ENCODE measurements at regions of chr4 and their contacts with region 1.

Region 1: DNA sequence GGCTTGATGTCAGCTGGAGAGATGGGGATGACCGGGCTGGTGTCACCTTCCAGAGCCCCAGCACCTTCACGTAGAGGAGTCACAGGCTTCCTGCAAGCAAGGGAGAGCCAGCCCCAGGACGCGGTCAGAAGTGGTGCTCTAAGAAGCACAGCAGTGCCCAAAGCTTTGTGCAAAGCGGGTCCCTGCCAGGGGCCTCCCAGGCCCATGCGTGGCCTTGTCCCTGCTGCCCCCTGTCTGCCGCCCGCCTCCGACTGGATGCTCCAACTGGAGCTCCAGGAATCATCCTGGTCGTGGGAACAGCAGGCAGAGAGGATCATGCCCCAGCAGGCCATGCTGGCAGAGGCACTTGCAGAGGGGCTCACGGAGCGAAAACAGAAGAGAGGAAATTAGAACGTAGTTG is 40.1 kb upstream of the LRPAP1 start:
- DNase-seq: no peak
- ATAC-seq: no peak
- H3K4me3 ChIP-seq: no peak overlapping the region
- H3K27ac ChIP-seq: no peak overlapping the region
- H3K4me1 ChIP-seq: no peaks in the 10 kb centered on the region
- H3K27me3 ChIP-seq: no peaks in the 10 kb centered on the region

Region 2: GRCh38 chr4:2817701-2818350 is 754.5 kb before region 1 on chr4:
- intact Hi-C with region 1: no loop called
- DNase-seq: no peak
- ATAC-seq: no peak
- H3K4me3 ChIP-seq: peak overlapping the region; percentile 29 to 78
- H3K27ac ChIP-seq: no peak overlapping the region
- H3K4me1 ChIP-seq: no peaks in the 10 kb centered on the region
- H3K27me3 ChIP-seq: no peaks in the 10 kb centered on the region

Region 3: DNA sequence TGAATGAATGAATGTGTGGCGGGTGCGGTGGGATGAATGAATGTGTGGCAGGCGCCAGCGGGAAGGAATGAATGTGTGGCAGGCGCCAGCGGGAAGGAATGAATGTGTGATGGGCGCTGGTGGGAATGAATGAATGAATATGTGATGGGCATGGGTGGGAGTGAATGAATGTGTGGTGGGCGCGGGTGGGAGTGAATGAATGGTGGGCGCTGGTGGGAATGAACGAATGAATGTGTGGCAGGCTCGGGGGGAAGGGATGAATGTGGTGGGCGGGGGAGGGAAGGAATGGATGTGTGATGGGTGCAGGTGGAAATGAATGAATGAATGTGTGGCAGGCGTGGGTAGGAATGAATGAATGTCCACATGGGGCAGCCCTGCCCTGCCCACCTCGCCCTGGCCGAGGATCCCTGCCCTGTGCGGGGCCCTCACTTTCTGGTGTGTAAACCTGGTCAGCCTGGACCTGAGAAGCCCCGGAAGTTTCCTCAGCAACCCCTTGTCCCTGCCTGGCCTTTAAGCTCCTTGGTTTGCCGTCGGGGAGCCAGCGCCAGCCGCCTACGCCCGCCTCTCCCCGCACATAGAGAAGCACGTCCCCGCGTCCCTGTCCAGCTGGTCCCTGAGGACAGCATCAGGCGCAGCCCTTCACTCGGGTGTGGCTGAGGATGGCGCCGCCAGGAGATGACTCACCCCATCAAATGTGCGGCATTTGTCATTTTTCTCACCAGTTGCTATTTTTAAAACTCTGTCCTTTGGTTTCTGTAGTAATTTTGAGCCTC is 72.7 kb after region 1 on chr4:
- intact Hi-C with region 1: no loop called
- DNase-seq: peak; percentile 60 to 85
- ATAC-seq: no peak
- H3K4me3 ChIP-seq: no peak overlapping the region
- H3K27ac ChIP-seq: no peak overlapping the region
- H3K4me1 ChIP-seq: no peaks in the 10 kb centered on the region
- H3K27me3 ChIP-seq: no peaks in the 10 kb centered on the region

Region 4: DNA sequence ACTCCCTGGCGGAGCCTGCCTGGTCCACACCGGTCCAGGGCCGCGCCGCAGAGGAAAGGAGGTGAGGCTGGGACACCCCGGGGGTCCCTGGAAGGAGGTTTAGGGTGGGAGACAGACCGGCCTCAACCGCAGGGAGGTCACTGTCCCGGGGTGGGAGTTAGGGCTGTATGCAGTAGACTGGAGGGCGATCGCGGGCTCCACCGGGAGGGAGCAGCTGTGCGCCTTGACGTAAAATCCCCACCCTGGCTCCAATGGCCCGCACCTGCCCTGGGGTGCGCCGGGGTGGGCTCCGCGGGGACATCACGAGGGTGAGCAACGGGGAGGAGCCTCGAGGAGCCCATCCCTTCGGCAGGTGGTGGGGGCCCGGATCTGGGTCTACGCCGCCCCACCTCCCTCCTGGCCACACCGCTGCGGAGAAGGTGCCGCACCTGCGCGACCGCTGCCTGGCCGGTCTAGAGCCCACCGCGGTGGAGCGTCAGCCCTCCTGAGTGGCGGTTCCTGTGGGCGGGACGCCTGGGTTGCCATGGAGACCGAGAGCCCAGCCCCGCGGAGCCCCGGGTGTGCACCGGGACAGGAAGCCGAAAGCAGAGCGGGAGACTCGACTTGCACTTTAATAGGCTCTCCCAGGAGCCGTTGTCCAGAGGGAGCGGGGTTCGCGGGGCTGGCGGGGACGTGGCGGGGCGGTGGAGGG is 299.0 kb after region 1 on chr4:
- intact Hi-C with region 1: loop called in 1 of 2 experiments (anchors 10 kb)
- DNase-seq: peak in 1 of 2 donors; percentile 74
- ATAC-seq: no peak
- H3K4me3 ChIP-seq: no peak overlapping the region
- H3K27ac ChIP-seq: no peak overlapping the region
- H3K4me1 ChIP-seq: no peaks in the 10 kb centered on the region
- H3K27me3 ChIP-seq: no peaks in the 10 kb centered on the region

Region 5: GRCh38 chr4:3880615-3881120 is 308.3 kb after region 1 on chr4:
- intact Hi-C with region 1: loop called (anchors 2 to 10 kb)
- DNase-seq: peak; percentile 74 to 90
- ATAC-seq: peak; percentile 82
- H3K4me3 ChIP-seq: no peak overlapping the region
- H3K27ac ChIP-seq: no peak overlapping the region
- H3K4me1 ChIP-seq: no peaks in the 10 kb centered on the region
- H3K27me3 ChIP-seq: no peaks in the 10 kb centered on the region

Measured in aorta (tissue), 5 donors.